ENCODE measurements at regions of chr17 and their contacts with region 1.

Region 1: GRCh38 chr17:4733073-4733531 is 1.9 kb downstream of the MED11 start:
- DNase-seq: no peak
- ATAC-seq: no peak
- H3K4me3 Mint-ChIP-seq: no peak overlapping the region
- H3K27ac Mint-ChIP-seq: peak overlapping the region; percentile 17
- H3K4me1 Mint-ChIP-seq: peaks cover 39% of the 10 kb centered on the region
- H3K27me3 Mint-ChIP-seq: peaks cover under 1% of the 10 kb centered on the region

Region 2: GRCh38 chr17:4796553-4796921 is 63.4 kb after region 1 on chr17:
- CTCF ChIA-PET with region 1: no interaction called
- POLR2A ChIA-PET with region 1: no interaction called
- intact Hi-C with region 1: loop called (anchors 1 to 2 kb)
- DNase-seq: peak; percentile 58
- ATAC-seq: no peak
- H3K4me3 Mint-ChIP-seq: peak overlapping the region; percentile 94
- H3K27ac Mint-ChIP-seq: peak overlapping the region; percentile 97
- H3K4me1 Mint-ChIP-seq: peaks cover 24% of the 10 kb centered on the region
- H3K27me3 Mint-ChIP-seq: peaks cover 3% of the 10 kb centered on the region

Region 3: DNA sequence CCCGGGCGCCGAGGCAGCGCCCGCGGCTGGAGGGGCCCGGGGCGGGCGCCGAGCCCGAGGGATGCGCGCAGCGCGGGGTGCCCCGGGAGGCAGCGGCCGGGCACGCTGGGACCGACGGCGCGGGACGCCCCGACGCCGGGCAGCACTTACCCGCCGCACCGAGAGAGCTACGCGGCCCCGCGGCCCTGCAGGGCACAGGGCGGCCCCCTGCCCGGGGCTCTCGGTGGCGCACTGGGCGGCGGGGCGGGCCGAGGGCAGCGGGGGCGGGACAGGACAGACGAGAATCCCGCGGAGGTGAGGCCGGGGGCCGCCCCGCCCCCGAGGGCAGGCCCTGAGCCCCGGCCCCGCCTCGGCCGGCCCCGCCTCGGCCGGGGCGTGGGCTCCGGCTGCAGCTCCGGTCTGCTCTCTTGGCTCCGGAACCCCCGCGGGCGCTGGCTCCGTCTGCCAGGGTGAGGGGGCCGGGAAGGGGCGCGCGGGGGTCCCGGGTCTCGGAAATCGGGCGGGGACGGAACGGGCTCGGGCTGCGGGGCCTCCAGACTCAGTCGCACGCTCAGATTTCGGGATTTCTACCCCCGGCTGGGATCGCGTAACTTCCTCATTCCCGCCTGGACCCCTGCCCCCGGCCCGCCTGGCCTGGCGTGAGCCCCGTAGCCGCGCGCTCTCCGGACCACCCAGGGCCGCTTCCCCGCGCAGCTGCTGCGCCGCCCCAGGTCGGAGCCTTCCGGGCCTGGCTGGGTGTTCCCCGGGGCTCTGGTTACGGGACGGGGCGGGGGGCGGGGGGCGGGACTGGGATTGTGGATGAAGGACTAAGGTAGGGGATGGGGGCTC is 73.9 kb after region 1 on chr17 and contains the start of gene PLD2:
- CTCF ChIA-PET with region 1: no interaction called
- POLR2A ChIA-PET with region 1: no interaction called
- intact Hi-C with region 1: loop called in 1 of 2 experiments (anchors 1 kb)
- DNase-seq: peak; percentile 93
- ATAC-seq: peak; percentile 98
- H3K4me3 Mint-ChIP-seq: peak within 1 kb of the TSS; percentile 73
- H3K27ac Mint-ChIP-seq: no peak within 1 kb of the TSS
- H3K4me1 Mint-ChIP-seq: peaks cover 7% of the 10 kb centered on the region
- H3K27me3 Mint-ChIP-seq: no peaks in the 10 kb centered on the region
- total RNA-seq, gene PLD2: 12.3 to 14.1 TPM

Region 4: GRCh38 chr17:4891411-4892342 is 158.6 kb after region 1 on chr17:
- CTCF ChIA-PET with region 1: interaction called, 7 read pairs
- POLR2A ChIA-PET with region 1: no interaction called
- intact Hi-C with region 1: loop called (anchors 1 kb)
- DNase-seq: no peak
- ATAC-seq: no peak
- H3K4me3 Mint-ChIP-seq: no peak overlapping the region
- H3K27ac Mint-ChIP-seq: no peak overlapping the region
- H3K4me1 Mint-ChIP-seq: no peaks in the 10 kb centered on the region
- H3K27me3 Mint-ChIP-seq: no peaks in the 10 kb centered on the region

Region 5: GRCh38 chr17:4903051-4903818 is 170.1 kb after region 1 on chr17 and contains the start of gene CHRNE:
- CTCF ChIA-PET with region 1: interaction called, 5 read pairs
- POLR2A ChIA-PET with region 1: no interaction called
- intact Hi-C with region 1: loop called in 1 of 2 experiments (anchors 1 kb)
- DNase-seq: peak; percentile 89
- ATAC-seq: peak; percentile 44
- H3K4me3 Mint-ChIP-seq: peak within 1 kb of the TSS; percentile 65
- H3K27ac Mint-ChIP-seq: peak within 1 kb of the TSS; percentile 72
- H3K4me1 Mint-ChIP-seq: peaks cover 26% of the 10 kb centered on the region
- H3K27me3 Mint-ChIP-seq: no peaks in the 10 kb centered on the region
- total RNA-seq, gene CHRNE: 0.59 to 0.84 TPM